ENCODE measurements at regions of chr19 and their contacts with region 1.

Region 1: DNA sequence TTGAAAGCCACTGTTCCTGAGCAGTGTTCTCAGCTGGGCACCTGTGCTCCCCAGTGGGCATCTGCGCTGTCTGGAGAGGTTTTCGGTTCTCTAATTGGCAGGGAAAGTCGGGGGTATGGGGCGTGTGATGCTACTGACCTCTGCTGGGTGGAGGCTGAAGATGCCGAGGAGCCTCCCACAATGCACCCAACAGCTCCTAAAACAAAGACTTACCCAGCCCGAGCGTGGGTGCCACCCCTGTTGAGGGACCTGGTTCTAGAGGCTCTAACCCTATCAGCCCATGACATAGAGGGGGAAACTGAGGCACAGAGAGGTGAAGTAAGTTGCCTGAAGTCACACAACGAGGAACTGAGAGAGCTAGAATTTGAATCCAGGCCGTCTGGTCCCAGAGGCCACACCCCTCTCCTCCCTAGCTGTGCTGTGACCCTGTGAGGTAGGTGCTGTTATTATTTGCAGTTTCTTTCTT is 2.3 kb downstream of the SPACA4 start:
- DNase-seq: peak in 2 of 5 donors; percentile 36 to 38
- H3K4me3 ChIP-seq: no peak overlapping the region
- H3K4me3 Mint-ChIP-seq: peak overlapping the region in 2 of 7 donors; percentile 44 to 48
- H3K27ac ChIP-seq: no peak overlapping the region
- H3K27ac Mint-ChIP-seq: peak overlapping the region in 5 of 8 donors; percentile 50 to 74 (median 51)
- H3K4me1 ChIP-seq: peaks cover 7% of the 10 kb centered on the region
- H3K4me1 Mint-ChIP-seq: peaks cover 4 to 6% (median 5%) of the 10 kb centered on the region in 3 donors
- H3K27me3 ChIP-seq: no peaks in the 10 kb centered on the region
- H3K27me3 Mint-ChIP-seq: no peaks in the 10 kb centered on the region

Region 2: DNA sequence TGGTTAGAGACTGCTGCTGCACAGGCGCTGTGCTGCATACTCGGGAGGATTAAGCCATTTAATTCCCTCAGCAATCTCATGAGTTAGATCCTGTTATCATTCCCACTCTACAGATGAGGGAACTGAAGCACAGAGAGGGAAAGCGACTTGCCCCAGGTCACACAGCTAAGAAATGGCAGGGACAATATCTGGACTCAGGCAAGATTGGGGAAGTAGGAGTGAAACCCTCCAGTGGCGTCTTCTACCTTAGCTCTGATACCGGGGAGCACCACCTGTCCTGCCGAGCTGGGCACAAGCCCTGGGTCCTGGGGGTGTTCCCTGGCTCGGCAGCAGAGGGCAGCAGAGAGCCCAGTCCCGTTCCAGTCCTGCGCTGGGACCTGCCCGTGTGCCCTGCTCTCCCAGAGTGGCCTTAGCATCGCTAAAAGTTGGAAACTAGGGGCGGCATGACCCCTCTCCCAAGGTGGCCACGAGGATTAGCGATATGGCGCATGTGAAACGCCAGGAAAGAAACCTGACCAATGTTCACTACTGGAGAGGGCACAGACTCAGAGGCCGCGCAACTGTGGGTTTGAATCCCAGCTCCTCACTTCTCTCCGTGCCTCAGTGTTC is 119.1 kb before region 1 on chr19:
- CTCF ChIA-PET with region 1: interaction called, 20 read pairs
- POLR2A ChIA-PET with region 1: no interaction called
- DNase-seq: peak; percentile 69 to 80 (median 75)
- H3K4me3 ChIP-seq: no peak overlapping the region
- H3K4me3 Mint-ChIP-seq: peak overlapping the region in 3 of 7 donors; percentile 15 to 40 (median 24)
- H3K27ac ChIP-seq: no peak overlapping the region
- H3K27ac Mint-ChIP-seq: peak overlapping the region in 1 of 8 donors; percentile 87
- H3K4me1 ChIP-seq: peaks cover 37% of the 10 kb centered on the region
- H3K4me1 Mint-ChIP-seq: peaks cover 20 to 39% (median 30%) of the 10 kb centered on the region in 3 donors
- H3K27me3 ChIP-seq: peaks cover 4% of the 10 kb centered on the region
- H3K27me3 Mint-ChIP-seq: peaks cover 17 to 19% of the 10 kb centered on the region in 2 donors

Region 3: GRCh38 chr19:48506138-48506733 is 102.6 kb before region 1 on chr19:
- CTCF ChIA-PET with region 1: interaction called, 22 read pairs
- POLR2A ChIA-PET with region 1: interaction called, 4 read pairs
- DNase-seq: peak in 2 of 5 donors; percentile 60
- H3K4me3 ChIP-seq: no peak overlapping the region
- H3K4me3 Mint-ChIP-seq: peak overlapping the region in 2 of 7 donors; percentile 15 to 64
- H3K27ac ChIP-seq: no peak overlapping the region
- H3K27ac Mint-ChIP-seq: peak overlapping the region in 2 of 8 donors; percentile 26 to 63
- H3K4me1 ChIP-seq: peaks cover 14% of the 10 kb centered on the region
- H3K4me1 Mint-ChIP-seq: peaks cover 13 to 24% (median 14%) of the 10 kb centered on the region in 3 donors
- H3K27me3 ChIP-seq: no peaks in the 10 kb centered on the region
- H3K27me3 Mint-ChIP-seq: peaks cover 0 to 1% of the 10 kb centered on the region in 2 donors

Region 4: DNA sequence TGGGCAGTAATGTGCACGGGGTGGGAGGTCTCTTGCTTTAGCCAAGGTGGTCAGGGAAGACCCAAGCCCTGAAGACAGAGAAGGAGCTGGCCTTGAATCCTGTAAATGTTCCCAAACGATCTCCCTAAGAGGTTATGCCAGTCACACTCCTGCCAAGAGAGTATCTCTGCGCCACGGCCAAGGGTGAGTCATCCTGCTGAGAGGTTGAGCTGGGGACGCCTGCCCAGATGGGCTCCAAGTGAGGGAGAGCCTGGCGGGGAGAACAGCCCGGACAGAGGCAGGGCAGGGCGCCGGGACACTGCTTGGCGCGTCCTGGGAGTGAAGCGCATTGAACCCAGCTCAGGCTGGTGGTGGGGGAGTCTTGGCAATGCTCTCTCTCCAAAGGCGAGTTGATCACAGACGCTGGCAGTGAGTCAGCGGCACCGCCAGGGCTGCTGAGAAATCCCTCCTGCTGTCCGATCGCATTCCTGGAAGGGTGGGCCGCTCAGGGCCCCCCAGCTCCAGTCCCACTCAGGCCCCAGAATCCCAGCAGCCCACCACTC is 40.4 kb before region 1 on chr19:
- CTCF ChIA-PET with region 1: no interaction called
- POLR2A ChIA-PET with region 1: no interaction called
- DNase-seq: peak in 1 of 5 donors; percentile 21
- H3K4me3 ChIP-seq: no peak overlapping the region
- H3K4me3 Mint-ChIP-seq: no peak overlapping the region
- H3K27ac ChIP-seq: no peak overlapping the region
- H3K27ac Mint-ChIP-seq: no peak overlapping the region
- H3K4me1 ChIP-seq: no peaks in the 10 kb centered on the region
- H3K4me1 Mint-ChIP-seq: no peaks in the 10 kb centered on the region
- H3K27me3 ChIP-seq: no peaks in the 10 kb centered on the region
- H3K27me3 Mint-ChIP-seq: peaks cover 5 to 13% of the 10 kb centered on the region in 2 donors

Region 5: GRCh38 chr19:48618916-48619691 is 10.3 kb after region 1 on chr19 and contains the starts of genes RPL18 and SPHK2:
- CTCF ChIA-PET with region 1: interaction called, 16 read pairs
- POLR2A ChIA-PET with region 1: interaction called, 3 read pairs
- DNase-seq: peak; percentile 91 to 97 (median 93)
- H3K4me3 ChIP-seq: peak within 1 kb of the TSS; percentile 76
- H3K4me3 Mint-ChIP-seq: peak within 1 kb of the TSS; percentile 94 to 100 (median 98)
- H3K27ac ChIP-seq: peak within 1 kb of the TSS; percentile 84
- H3K27ac Mint-ChIP-seq: peak within 1 kb of the TSS; percentile 90 to 99 (median 98)
- H3K4me1 ChIP-seq: peaks cover 43% of the 10 kb centered on the region
- H3K4me1 Mint-ChIP-seq: peaks cover 54 to 67% (median 62%) of the 10 kb centered on the region in 3 donors
- H3K27me3 ChIP-seq: no peaks in the 10 kb centered on the region
- H3K27me3 Mint-ChIP-seq: peaks cover 0 to 3% of the 10 kb centered on the region in 2 donors
- total RNA-seq, gene RPL18: 1,778 to 1,810 TPM
- total RNA-seq, gene SPHK2: 37.5 to 38.5 TPM

Region 6: GRCh38 chr19:48734625-48735555 is 126.1 kb after region 1 on chr19:
- CTCF ChIA-PET with region 1: no interaction called
- POLR2A ChIA-PET with region 1: no interaction called
- DNase-seq: no peak
- H3K4me3 ChIP-seq: no peak overlapping the region
- H3K4me3 Mint-ChIP-seq: no peak overlapping the region
- H3K27ac ChIP-seq: no peak overlapping the region
- H3K27ac Mint-ChIP-seq: no peak overlapping the region
- H3K4me1 ChIP-seq: peaks cover 14% of the 10 kb centered on the region
- H3K4me1 Mint-ChIP-seq: peaks cover 2 to 9% (median 7%) of the 10 kb centered on the region in 3 donors
- H3K27me3 ChIP-seq: no peaks in the 10 kb centered on the region
- H3K27me3 Mint-ChIP-seq: peaks cover 0 to 2% of the 10 kb centered on the region in 2 donors